ENCODE measurements at regions of chr3 and their contacts with region 1.

Region 1: GRCh38 chr3:72395776-72396311 is 452.4 kb downstream of the SHQ1 start:
- DNase-seq: no peak

Region 2: GRCh38 chr3:71885006-71885405 is 510.8 kb before region 1 on chr3:
- intact Hi-C with region 1: no loop called
- DNase-seq: no peak

Region 3: DNA sequence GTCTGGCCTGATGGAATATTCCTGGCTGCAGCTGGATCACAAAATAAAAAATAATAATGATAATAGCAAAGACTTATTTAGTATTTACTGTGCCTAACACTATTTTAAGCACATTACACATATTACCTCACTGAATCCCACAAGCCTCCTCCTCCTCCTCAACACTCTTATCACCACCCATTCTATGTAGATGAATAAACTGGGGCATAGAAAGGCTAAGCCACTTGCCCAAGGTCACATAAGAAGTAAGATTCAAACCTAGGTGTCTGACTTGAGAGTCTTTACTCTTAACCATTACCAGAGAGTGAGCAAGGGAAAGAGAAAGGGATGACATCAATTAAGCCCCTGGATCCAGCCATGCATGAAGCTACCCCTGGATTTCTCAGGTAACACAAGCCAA is 40.7 kb before region 1 on chr3:
- intact Hi-C with region 1: loop called in 1 of 2 experiments (anchors 1 kb)
- DNase-seq: no peak

Region 4: DNA sequence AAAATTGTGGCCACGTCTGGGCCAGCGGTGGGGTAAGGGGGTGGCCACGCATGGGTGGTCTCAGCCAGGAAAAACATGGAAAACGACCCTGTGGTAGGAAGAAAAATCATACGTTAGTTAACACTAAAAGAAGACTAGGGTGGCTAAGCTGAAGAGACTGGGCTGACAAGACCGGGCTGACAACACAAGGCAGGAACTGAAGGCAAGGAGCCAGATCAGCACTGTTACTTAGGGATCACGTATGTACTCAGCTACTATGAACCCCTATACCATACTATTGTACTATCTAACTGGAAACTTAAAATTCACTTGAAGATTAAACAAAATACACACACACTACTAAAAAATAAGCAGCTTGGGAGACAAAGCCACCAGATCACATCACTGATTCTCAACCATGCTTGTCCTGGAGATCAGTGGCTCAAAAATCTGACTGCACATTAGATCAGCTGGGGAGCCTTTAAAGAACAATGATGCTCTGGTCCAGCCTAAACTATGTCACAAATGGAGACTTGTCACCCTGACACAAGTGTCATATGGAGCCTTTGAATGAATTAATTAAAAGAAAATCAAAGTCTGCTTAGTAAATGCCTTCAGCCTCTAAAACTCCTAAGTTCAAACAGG is 10.2 kb after region 1 on chr3:
- intact Hi-C with region 1: no loop called
- DNase-seq: no peak

Measured in posterior vena cava (tissue), 2 donors.